A673 (cell line): ENCODE measurements at regions of chr6 and their contacts with region 1.

Region 1: GRCh38 chr6:35139908-35140655 is 1.1 kb downstream of the TCP11 start:
- DNase-seq: peak; percentile 77
- H3K4me3 ChIP-seq: no peak overlapping the region
- H3K27ac ChIP-seq: no peak overlapping the region
- H3K4me1 ChIP-seq: peaks cover 5% of the 10 kb centered on the region
- H3K27me3 ChIP-seq: no peaks in the 10 kb centered on the region
- CTCF ChIP-seq: peak; percentile 89

Region 2: GRCh38 chr6:34459899-34460593 is 680.0 kb before region 1 on chr6:
- CTCF ChIA-PET with region 1: no interaction called
- POLR2A ChIA-PET with region 1: no interaction called
- intact Hi-C with region 1: loop called (anchors 5 kb)
- DNase-seq: peak; percentile 58
- H3K4me3 ChIP-seq: no peak overlapping the region
- H3K27ac ChIP-seq: no peak overlapping the region
- H3K4me1 ChIP-seq: peaks cover under 1% of the 10 kb centered on the region
- H3K27me3 ChIP-seq: no peaks in the 10 kb centered on the region
- CTCF ChIP-seq: peak; percentile 79

Region 3: GRCh38 chr6:34986845-34987246 is 153.2 kb before region 1 on chr6:
- CTCF ChIA-PET with region 1: interaction called, 35 read pairs
- POLR2A ChIA-PET with region 1: interaction called, 3 read pairs
- intact Hi-C with region 1: loop called (anchors 1 kb)
- DNase-seq: peak; percentile 90
- H3K4me3 ChIP-seq: no peak overlapping the region
- H3K27ac ChIP-seq: no peak overlapping the region
- H3K4me1 ChIP-seq: peaks cover 12% of the 10 kb centered on the region
- H3K27me3 ChIP-seq: no peaks in the 10 kb centered on the region
- CTCF ChIP-seq: peak; percentile 89

Region 4: DNA sequence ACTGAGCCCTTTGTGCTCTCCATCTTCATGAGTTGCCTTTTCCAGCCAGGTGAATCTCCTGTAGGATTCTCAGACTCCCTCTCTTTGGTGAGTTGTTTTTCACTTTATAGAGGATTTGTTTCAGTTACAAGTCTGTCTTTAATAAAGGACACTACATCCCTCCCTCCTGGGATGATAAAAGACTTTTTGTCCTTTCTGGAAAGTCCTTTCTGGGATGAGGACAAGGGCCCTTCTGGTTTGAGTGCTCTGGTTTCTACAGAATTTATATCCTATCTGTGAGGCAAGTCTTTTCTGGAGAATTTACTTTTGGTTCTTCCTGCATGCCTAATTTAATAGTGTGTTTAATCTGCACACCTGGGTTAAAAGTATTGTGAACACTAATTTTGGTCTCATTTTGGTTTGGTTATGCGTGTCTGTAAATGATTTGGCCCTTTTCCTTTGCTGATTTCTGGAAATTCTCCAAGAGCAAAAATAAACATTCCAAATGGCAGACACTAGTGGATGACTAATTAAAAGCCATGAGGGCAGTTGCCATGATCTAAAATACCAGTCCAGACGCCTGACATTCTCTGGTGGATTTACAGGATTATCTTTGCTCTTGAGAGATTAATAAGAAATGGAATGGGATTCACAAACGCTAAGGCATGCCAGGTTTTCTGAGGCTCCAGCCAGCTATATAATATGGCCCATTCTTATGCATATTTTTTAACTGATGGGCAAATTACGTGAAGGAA is 43.8 kb before region 1 on chr6:
- CTCF ChIA-PET with region 1: no interaction called
- POLR2A ChIA-PET with region 1: no interaction called
- intact Hi-C with region 1: no loop called
- DNase-seq: peak; percentile 39
- H3K4me3 ChIP-seq: no peak overlapping the region
- H3K27ac ChIP-seq: no peak overlapping the region
- H3K4me1 ChIP-seq: peaks cover 9% of the 10 kb centered on the region
- H3K27me3 ChIP-seq: no peaks in the 10 kb centered on the region
- CTCF ChIP-seq: no peak

Region 5: GRCh38 chr6:35128496-35128895 is 11.6 kb before region 1 on chr6:
- CTCF ChIA-PET with region 1: no interaction called
- POLR2A ChIA-PET with region 1: no interaction called
- intact Hi-C with region 1: no loop called
- DNase-seq: no peak
- H3K4me3 ChIP-seq: no peak overlapping the region
- H3K27ac ChIP-seq: no peak overlapping the region
- H3K4me1 ChIP-seq: no peaks in the 10 kb centered on the region
- H3K27me3 ChIP-seq: no peaks in the 10 kb centered on the region
- CTCF ChIP-seq: no peak

Region 6: GRCh38 chr6:35152067-35152707 is 12.1 kb after region 1 on chr6:
- CTCF ChIA-PET with region 1: no interaction called
- POLR2A ChIA-PET with region 1: no interaction called
- intact Hi-C with region 1: no loop called
- DNase-seq: no peak
- H3K4me3 ChIP-seq: no peak overlapping the region
- H3K27ac ChIP-seq: no peak overlapping the region
- H3K4me1 ChIP-seq: no peaks in the 10 kb centered on the region
- H3K27me3 ChIP-seq: no peaks in the 10 kb centered on the region
- CTCF ChIP-seq: no peak

Region 7: DNA sequence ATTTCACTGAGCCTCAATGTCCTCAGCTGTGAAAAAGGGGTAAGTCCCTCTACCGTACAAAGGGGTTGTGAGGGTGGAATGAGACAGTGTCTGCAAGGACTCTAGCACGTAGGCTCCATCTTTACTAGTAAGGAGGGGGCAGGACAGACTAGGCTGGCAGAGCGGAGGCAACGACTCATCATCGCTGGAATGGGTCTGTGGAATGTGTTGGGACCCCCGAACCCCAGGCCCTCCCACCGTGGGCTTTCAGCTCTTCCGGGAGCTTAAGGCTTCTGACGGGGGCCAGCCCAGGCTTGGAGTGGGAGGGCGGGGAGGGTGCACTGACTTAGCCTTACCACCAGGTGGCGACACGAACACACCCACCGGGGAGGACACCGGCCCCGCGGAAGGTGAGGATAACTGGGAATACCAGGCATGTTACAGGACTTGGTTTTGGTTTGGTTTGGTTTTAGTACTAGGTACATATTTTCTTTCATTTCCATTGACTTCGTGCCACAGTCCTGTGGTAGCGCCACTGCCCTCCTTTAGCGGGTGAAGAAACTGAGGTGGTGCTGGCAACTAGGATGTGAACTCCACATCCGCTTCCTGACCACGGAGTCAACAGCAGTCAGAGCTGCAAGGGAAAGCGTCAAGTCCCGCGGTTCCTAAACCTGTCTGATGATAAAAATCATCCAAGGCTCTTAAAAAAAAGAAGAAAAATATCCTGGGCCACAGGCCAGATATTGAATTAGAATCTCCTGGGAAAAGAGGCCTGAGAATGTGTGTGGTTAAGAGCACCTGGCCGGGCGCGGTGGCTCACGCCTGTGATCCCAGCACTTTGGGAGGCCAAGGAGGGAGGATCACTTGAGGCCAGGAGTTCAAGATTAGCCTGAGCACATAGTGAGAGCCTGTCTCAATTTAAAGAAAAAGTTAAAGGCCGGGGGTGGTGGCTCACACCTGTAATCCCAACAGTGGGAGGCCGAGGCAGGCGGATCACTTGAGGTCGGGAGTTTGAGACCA is 382.9 kb after region 1 on chr6:
- CTCF ChIA-PET with region 1: no interaction called
- POLR2A ChIA-PET with region 1: no interaction called
- intact Hi-C with region 1: no loop called
- DNase-seq: peak; percentile 81
- H3K4me3 ChIP-seq: no peak overlapping the region
- H3K27ac ChIP-seq: no peak overlapping the region
- H3K4me1 ChIP-seq: no peaks in the 10 kb centered on the region
- H3K27me3 ChIP-seq: no peaks in the 10 kb centered on the region
- CTCF ChIP-seq: peak; percentile 95